ENCODE measurements at regions of chr5 and their contacts with region 1.

Region 1: DNA sequence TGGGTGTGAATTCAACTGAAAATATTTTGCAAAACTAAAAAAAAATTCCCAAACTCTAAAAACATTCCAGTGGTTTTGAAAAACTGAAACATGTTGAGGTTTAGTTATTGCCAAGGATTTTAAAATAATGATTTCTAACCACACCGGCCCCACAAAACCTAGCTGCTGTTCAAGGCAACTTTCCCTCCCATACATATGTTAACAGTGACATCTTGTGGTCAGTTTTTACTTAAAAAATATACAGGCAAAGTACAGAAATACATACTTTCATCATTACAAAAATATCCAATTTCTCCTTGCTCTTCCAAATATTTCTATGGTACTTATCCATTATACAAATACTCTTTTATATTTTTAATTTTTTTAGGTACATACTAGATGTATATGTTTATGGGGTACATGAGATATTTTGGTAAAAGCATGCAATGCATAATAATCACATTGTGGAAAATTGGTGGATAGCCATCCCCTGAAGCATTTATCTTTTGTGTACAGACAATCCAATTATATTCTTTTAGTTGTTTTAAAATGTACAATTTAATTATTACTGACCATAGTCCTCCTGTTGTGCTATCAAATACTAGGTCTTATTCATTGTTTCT is 34.4 kb upstream of the MRPS30 start:
- DNase-seq: peak; percentile 29 to 55 (median 33)
- ATAC-seq: peak; percentile 81
- H3K4me3 ChIP-seq: no peak overlapping the region
- H3K27ac ChIP-seq: no peak overlapping the region
- H3K4me1 ChIP-seq: no peaks in the 10 kb centered on the region
- H3K27me3 ChIP-seq: no peaks in the 10 kb centered on the region
- CTCF ChIP-seq: peak; percentile 34 to 69 (median 46); a peak in 3 of 6 replicates
- EP300 ChIP-seq: no peak
- POLR2A ChIP-seq: no peak
- RAD21 ChIP-seq: peak; percentile 77 to 94

Region 2: DNA sequence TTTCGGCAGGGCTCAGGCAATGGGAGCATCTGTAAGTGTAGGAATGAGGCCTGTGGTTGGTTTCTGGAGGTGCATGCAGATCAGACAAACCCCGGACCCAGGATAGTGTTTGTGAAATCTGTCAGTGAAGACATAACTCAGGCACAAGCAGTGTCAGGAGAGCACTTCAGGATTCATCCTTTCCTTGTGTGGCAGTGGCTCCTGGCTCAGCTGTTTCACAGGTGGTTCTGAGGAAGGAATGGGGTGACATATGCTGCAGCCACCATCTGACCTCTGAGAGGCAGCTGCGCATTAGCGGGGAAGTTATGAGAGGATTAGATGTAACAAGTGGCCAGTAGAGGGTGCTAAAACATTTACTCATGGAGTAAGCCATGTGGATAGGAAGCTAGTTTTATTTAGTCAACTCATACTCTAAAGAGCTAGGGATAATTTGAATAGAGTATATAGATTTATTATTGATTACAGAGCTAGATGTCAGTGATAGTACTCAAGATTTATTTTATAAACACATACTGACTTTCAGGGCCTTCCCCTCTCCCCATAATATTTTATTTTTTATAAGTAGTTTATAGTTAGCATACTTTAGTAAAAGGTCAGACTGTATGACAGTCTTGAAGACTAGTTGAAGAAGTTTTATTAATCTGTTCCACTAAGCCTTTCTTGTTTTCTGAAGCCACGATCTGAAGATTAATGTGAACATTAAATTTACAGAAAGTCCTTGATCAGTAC is 1143.0 kb before region 1 on chr5:
- CTCF ChIA-PET with region 1: interaction called, 5 read pairs
- POLR2A ChIA-PET with region 1: no interaction called
- in situ Hi-C with region 1: no loop called
- intact Hi-C with region 1: loop called (anchors 1 kb)
- DNase-seq: peak; percentile 67 to 90 (median 75)
- ATAC-seq: peak; percentile 99
- H3K4me3 ChIP-seq: no peak overlapping the region
- H3K27ac ChIP-seq: peak overlapping the region; percentile 37; the same call in 1 of the 3 replicates
- H3K4me1 ChIP-seq: peaks cover 0 to 2% of the 10 kb centered on the region in 2 experiments; a peak in 2 of 5 replicates
- H3K27me3 ChIP-seq: no peaks in the 10 kb centered on the region
- CTCF ChIP-seq: peak; percentile 75 to 90 (median 89)
- EP300 ChIP-seq: no peak
- POLR2A ChIP-seq: no peak
- RAD21 ChIP-seq: peak; percentile 73 to 77

Region 3: GRCh38 chr5:43729846-43730478 is 1044.4 kb before region 1 on chr5:
- CTCF ChIA-PET with region 1: no interaction called
- POLR2A ChIA-PET with region 1: no interaction called
- in situ Hi-C with region 1: no loop called
- intact Hi-C with region 1: loop called (anchors 5 kb)
- DNase-seq: peak in 1 of 4 experiments; percentile 25
- ATAC-seq: peak; percentile 49; the same call in 2 of the 3 replicates
- H3K4me3 ChIP-seq: no peak overlapping the region
- H3K27ac ChIP-seq: no peak overlapping the region
- H3K4me1 ChIP-seq: no peaks in the 10 kb centered on the region
- H3K27me3 ChIP-seq: no peaks in the 10 kb centered on the region
- CTCF ChIP-seq: peak in 2 of 3 experiments; percentile 32 to 68; a peak in 3 of 6 replicates
- EP300 ChIP-seq: no peak
- POLR2A ChIP-seq: no peak
- RAD21 ChIP-seq: peak; percentile 94 to 96

Region 4: DNA sequence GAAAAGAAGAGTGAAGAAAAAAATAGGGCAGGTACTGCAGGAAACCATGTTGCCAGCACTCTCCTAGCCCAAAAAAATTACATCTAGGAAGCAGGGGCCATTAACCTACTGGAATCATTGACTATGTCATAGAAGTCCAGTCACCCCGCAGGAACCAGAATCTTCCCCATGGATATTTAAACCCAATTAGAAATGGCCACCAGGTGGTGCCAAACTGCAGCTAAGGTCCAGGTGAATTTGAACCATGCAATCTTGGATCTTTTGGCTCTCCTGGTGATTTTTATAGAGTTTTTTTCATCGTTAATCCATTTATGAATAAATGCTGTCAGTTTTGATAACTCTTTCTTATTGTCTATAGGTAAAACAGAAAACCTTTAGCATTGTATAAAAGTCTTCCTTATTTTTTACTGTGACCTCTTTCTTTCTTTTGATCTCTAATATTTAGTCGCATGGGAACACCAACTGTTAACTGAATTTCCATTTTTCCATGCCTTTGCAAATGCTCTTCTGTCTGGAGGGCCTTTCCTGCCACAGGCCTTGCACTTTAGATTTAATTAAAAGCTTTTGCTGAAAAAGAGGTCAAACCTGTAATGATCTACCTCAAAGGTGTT is 237.6 kb before region 1 on chr5:
- CTCF ChIA-PET with region 1: no interaction called
- POLR2A ChIA-PET with region 1: no interaction called
- in situ Hi-C with region 1: no loop called
- intact Hi-C with region 1: loop called (anchors 2 kb)
- DNase-seq: peak; percentile 28 to 49 (median 44)
- ATAC-seq: no peak
- H3K4me3 ChIP-seq: no peak overlapping the region
- H3K27ac ChIP-seq: no peak overlapping the region
- H3K4me1 ChIP-seq: no peaks in the 10 kb centered on the region
- H3K27me3 ChIP-seq: no peaks in the 10 kb centered on the region
- CTCF ChIP-seq: peak; percentile 22 to 58 (median 54); a peak in 4 of 6 replicates
- EP300 ChIP-seq: no peak
- POLR2A ChIP-seq: no peak
- RAD21 ChIP-seq: peak; percentile 67 to 72

Region 5: DNA sequence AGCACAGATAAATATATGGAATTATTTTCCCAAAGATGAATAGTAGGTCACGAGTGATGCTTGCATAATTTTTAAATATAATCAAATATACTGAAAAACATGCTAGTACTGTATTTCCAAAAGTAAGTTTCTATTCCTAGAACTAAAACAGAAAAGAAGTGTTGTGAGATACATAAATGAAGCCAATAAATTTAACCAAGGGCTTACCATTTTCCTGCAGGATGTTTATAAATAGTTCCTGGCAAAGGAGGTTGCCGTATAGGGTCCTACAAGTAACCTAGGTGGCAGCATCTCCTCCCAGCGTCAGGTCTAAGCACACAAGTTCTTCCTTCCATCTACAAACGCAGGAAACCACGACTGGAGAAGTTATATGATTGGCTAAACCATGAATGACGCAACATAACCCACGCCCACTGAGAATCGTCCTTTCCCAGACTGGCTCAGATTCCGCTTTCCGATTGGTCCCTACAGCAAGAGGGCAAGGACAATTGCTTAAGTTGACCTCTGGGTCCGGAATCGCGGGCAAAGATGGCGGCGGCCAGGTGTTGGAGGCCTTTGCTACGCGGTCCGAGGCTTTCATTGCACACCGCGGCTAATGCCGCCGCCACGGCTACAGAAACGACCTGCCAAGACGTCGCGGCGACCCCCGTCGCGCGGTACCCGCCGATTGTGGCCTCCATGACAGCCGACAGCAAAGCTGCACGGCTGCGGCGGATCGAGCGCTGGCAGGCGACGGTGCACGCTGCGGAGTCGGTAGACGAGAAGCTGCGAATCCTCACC is 34.2 kb after region 1 on chr5 and contains the start of gene MRPS30:
- CTCF ChIA-PET with region 1: no interaction called
- POLR2A ChIA-PET with region 1: no interaction called
- in situ Hi-C with region 1: no loop called
- intact Hi-C with region 1: no loop called
- DNase-seq: peak; percentile 89 to 99 (median 93)
- ATAC-seq: peak; percentile 92
- H3K4me3 ChIP-seq: peak within 1 kb of the TSS; percentile 91
- H3K27ac ChIP-seq: peak within 1 kb of the TSS; percentile 94
- H3K4me1 ChIP-seq: peaks cover 5 to 13% of the 10 kb centered on the region in 2 experiments; a peak in 3 of 5 replicates
- H3K27me3 ChIP-seq: no peaks in the 10 kb centered on the region
- CTCF ChIP-seq: peak; percentile 43 to 68 (median 61)
- EP300 ChIP-seq: 0 out of 2 replicates have a peak, but pooled peaks have one; percentile 5
- POLR2A ChIP-seq: peak; percentile 93
- RAD21 ChIP-seq: peak in 1 of 2 experiments; percentile 31; a peak in 2 of 4 replicates
- polyA plus RNA-seq, gene MRPS30: 24.3 to 33.4 TPM

Region 6: GRCh38 chr5:45060724-45061123 is 286.3 kb after region 1 on chr5:
- CTCF ChIA-PET with region 1: no interaction called
- POLR2A ChIA-PET with region 1: no interaction called
- in situ Hi-C with region 1: no loop called
- intact Hi-C with region 1: no loop called
- DNase-seq: no peak
- ATAC-seq: no peak
- H3K4me3 ChIP-seq: no peak overlapping the region
- H3K27ac ChIP-seq: no peak overlapping the region
- H3K4me1 ChIP-seq: no peaks in the 10 kb centered on the region
- H3K27me3 ChIP-seq: no peaks in the 10 kb centered on the region
- CTCF ChIP-seq: no peak
- EP300 ChIP-seq: no peak
- POLR2A ChIP-seq: no peak
- RAD21 ChIP-seq: no peak

Measured in K562 (cell line).